Activated B cell treated with CpG ODN at 0.5 μM for 24 hours (primary cell): ENCODE measurements at regions of chr1 and their contacts with region 1.

Region 1: GRCh38 chr1:35544978-35545377 is 12.2 kb downstream of the KIAA0319L start:
- DNase-seq: no peak
- ATAC-seq: no peak
- H3K4me3 Mint-ChIP-seq: no peak overlapping the region
- H3K27ac Mint-ChIP-seq: no peak overlapping the region
- H3K4me1 Mint-ChIP-seq: peaks cover 26% of the 10 kb centered on the region
- H3K27me3 Mint-ChIP-seq: no peaks in the 10 kb centered on the region
- CTCF ChIP-seq: no peak

Region 2: DNA sequence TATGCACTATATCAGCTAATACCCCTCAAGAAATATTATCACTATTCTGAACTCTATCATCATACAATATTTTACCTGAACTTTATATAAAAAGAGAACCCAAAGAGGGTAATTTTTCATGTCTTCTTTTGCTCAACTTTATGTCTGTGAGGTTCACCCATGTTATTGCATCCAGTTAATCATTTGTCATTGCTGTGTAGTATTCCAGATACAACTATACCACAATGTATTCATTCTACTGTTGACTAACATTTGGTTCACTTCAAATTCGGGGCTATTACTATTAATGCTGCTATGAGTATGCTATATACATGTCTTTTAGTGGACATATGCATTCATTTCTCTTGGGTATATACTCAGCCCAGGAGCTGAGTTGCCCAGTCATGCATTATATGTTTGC is 594.5 kb before region 1 on chr1:
- CTCF ChIA-PET with region 1: no interaction called
- POLR2A ChIA-PET with region 1: no interaction called
- intact Hi-C with region 1: no loop called
- DNase-seq: no peak
- ATAC-seq: no peak
- H3K4me3 Mint-ChIP-seq: no peak overlapping the region
- H3K27ac Mint-ChIP-seq: no peak overlapping the region
- H3K4me1 Mint-ChIP-seq: no peaks in the 10 kb centered on the region
- H3K27me3 Mint-ChIP-seq: peaks cover 22% of the 10 kb centered on the region
- CTCF ChIP-seq: no peak

Region 3: DNA sequence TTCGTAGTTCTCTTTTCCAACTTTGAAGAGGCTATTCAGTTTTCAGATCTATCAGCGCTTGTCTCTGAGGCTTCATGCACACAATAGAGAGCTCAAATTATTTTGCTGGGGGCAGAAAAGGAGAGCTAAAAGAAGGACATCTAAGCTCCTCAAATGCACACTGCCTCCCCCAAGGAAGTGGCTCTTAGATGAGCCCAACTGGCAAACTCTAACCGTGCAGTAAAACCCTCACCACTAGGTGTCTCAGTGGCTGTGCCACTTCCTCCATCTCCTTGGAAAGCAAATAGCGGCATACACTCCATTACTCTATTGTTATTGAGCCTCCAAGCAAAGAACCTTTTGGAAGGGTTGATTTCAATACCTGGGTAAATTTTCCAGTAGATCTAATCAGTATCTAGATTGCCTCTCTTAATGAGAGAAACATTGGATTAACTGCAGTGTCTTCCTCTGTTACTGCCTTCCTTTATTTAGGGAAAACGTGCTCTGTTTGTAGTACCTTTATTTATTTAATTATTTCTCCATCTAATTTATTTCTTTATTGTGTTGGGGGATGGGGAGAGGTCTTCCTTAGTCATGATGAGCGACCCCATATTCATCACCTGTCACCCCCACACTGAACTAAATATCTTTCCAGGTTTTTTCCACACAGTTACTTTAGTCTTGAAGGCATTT is 342.8 kb before region 1 on chr1:
- CTCF ChIA-PET with region 1: no interaction called
- POLR2A ChIA-PET with region 1: no interaction called
- intact Hi-C with region 1: loop called (anchors 5 kb)
- DNase-seq: peak; percentile 30
- ATAC-seq: peak; percentile 100
- H3K4me3 Mint-ChIP-seq: no peak overlapping the region
- H3K27ac Mint-ChIP-seq: no peak overlapping the region
- H3K4me1 Mint-ChIP-seq: peaks cover 5% of the 10 kb centered on the region
- H3K27me3 Mint-ChIP-seq: no peaks in the 10 kb centered on the region
- CTCF ChIP-seq: peak; percentile 58

Region 4: DNA sequence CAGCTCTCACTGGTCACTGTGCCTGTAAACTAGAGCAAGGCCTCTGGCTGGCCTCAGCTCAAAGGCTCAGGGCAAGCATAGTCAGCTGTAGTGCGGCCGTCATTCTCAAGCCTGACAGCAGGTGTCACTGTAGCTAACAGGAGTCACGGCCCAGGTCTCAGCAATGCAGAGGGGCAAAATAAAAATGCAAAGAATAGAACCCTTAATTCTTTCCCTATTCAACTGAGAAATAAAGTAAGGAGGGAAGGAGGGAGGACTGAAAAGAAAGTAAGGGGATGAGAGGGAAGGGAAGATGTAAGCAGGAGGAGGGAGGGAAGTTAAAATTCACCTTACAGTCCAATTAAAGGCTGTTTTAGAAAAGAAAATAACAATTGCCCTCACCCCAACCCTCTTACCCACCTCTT is 93.9 kb before region 1 on chr1:
- CTCF ChIA-PET with region 1: interaction called, 7 read pairs
- POLR2A ChIA-PET with region 1: no interaction called
- intact Hi-C with region 1: loop called (anchors 1 kb)
- DNase-seq: peak; percentile 48
- ATAC-seq: peak; percentile 87
- H3K4me3 Mint-ChIP-seq: no peak overlapping the region
- H3K27ac Mint-ChIP-seq: no peak overlapping the region
- H3K4me1 Mint-ChIP-seq: no peaks in the 10 kb centered on the region
- H3K27me3 Mint-ChIP-seq: no peaks in the 10 kb centered on the region
- CTCF ChIP-seq: no peak